Caco-2 (cell line): ENCODE measurements at regions of chr6 and their contacts with region 1.

Region 1: DNA sequence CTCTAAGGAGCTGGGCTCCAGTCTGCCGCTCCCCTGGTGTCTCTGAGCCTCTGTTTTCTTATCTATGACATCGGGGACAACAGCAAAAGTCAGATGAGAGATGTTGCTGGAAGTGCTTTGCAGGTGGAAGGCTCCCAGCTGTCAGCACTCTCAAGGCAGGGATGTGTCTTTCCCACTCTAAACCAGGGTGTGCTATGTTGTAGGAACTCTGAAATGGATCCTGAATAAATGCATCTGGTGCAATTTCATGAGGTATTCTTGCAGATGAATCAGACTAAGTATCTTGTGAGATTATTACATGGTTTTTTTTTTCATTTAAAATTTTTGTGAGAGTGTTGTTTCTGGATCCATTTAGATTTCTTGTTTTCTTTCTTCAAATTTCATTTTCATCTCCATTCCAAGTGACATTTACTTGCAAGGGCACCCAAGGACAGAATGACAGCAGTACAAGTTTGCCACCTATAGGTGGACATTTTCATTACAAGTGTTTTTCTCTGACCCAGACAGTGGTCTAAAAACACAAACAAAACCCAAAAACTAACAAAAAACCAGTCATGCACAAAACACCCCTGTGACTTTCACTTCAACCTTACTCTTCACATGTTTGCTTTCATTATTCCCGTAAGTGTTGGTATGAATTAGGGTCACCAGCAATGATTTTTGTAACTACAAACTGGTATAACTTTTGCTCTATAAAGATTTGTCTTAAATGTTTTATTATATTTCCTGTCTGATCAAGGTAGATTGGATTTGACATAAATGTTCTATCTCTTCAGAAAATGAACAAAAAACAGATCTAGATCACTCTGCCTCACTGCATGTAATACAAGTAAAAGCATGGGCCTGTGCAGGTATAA is 14.7 kb upstream of the SIM1 start:
- DNase-seq: peak in 1 of 2 experiments; percentile 55
- H3K4me3 ChIP-seq: no peak overlapping the region
- H3K4me3 Mint-ChIP-seq: no peak overlapping the region
- H3K27ac Mint-ChIP-seq: no peak overlapping the region
- H3K4me1 ChIP-seq: no peaks in the 10 kb centered on the region
- H3K4me1 Mint-ChIP-seq: no peaks in the 10 kb centered on the region
- H3K27me3 ChIP-seq: no peaks in the 10 kb centered on the region
- H3K27me3 Mint-ChIP-seq: no peaks in the 10 kb centered on the region
- CTCF ChIP-seq: peak; percentile 70 to 73

Region 2: GRCh38 chr6:100105138-100105753 is 374.2 kb before region 1 on chr6:
- CTCF ChIA-PET with region 1: no interaction called
- POLR2A ChIA-PET with region 1: no interaction called
- intact Hi-C with region 1: loop called (anchors 2 kb)
- DNase-seq: no peak
- H3K4me3 ChIP-seq: no peak overlapping the region
- H3K4me3 Mint-ChIP-seq: no peak overlapping the region
- H3K27ac Mint-ChIP-seq: no peak overlapping the region
- H3K4me1 ChIP-seq: no peaks in the 10 kb centered on the region
- H3K4me1 Mint-ChIP-seq: no peaks in the 10 kb centered on the region
- H3K27me3 ChIP-seq: no peaks in the 10 kb centered on the region
- H3K27me3 Mint-ChIP-seq: no peaks in the 10 kb centered on the region
- CTCF ChIP-seq: no peak

Region 3: GRCh38 chr6:100176311-100176950 is 303.0 kb before region 1 on chr6:
- CTCF ChIA-PET with region 1: no interaction called
- POLR2A ChIA-PET with region 1: no interaction called
- intact Hi-C with region 1: loop called (anchors 1 kb)
- DNase-seq: peak; percentile 35 to 42
- H3K4me3 ChIP-seq: no peak overlapping the region
- H3K4me3 Mint-ChIP-seq: no peak overlapping the region
- H3K27ac Mint-ChIP-seq: no peak overlapping the region
- H3K4me1 ChIP-seq: no peaks in the 10 kb centered on the region
- H3K4me1 Mint-ChIP-seq: peaks cover 8% of the 10 kb centered on the region
- H3K27me3 ChIP-seq: no peaks in the 10 kb centered on the region
- H3K27me3 Mint-ChIP-seq: no peaks in the 10 kb centered on the region
- CTCF ChIP-seq: peak; percentile 34 to 37

Region 4: DNA sequence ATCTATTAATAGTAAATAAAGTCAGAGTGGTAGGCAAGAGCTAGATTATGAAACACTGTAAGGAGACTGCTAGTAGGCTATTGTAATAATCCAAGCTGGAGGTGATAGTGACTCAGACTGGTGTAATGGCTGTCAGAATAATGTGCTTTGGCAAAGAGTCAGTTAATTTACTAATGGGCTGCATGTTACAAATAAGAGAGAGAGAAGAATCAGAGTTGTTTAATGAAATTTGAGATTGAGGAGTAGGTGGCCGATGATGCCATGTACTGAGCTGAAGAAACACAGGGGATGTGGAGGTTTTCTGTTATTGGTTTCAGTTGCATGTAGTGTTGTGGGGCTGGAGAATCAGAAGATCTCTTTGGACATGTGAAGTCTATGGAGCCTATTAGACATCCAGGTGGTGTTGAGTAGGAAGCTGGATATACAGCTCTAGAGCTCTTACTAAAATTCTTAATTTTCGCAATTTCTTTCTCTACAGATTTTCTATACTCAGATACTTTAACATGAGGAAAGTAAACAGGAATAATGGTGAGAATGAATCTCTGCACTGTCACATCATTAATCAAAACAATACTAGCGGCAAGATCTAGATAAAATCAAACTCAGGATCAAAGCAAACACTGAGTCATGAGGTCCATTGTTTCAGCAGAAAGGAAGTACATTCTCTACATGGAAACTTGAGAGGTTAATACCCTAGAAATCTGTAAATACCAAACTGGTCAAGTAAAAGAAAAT is 182.4 kb before region 1 on chr6:
- CTCF ChIA-PET with region 1: no interaction called
- POLR2A ChIA-PET with region 1: no interaction called
- intact Hi-C with region 1: no loop called
- DNase-seq: no peak
- H3K4me3 ChIP-seq: no peak overlapping the region
- H3K4me3 Mint-ChIP-seq: no peak overlapping the region
- H3K27ac Mint-ChIP-seq: no peak overlapping the region
- H3K4me1 ChIP-seq: peaks cover 36% of the 10 kb centered on the region
- H3K4me1 Mint-ChIP-seq: peaks cover 15% of the 10 kb centered on the region
- H3K27me3 ChIP-seq: no peaks in the 10 kb centered on the region
- H3K27me3 Mint-ChIP-seq: no peaks in the 10 kb centered on the region
- CTCF ChIP-seq: no peak

Region 5: GRCh38 chr6:100322886-100323285 is 156.5 kb before region 1 on chr6:
- CTCF ChIA-PET with region 1: no interaction called
- POLR2A ChIA-PET with region 1: no interaction called
- intact Hi-C with region 1: loop called (anchors 1 kb)
- DNase-seq: no peak
- H3K4me3 ChIP-seq: no peak overlapping the region
- H3K4me3 Mint-ChIP-seq: no peak overlapping the region
- H3K27ac Mint-ChIP-seq: no peak overlapping the region
- H3K4me1 ChIP-seq: no peaks in the 10 kb centered on the region
- H3K4me1 Mint-ChIP-seq: no peaks in the 10 kb centered on the region
- H3K27me3 ChIP-seq: no peaks in the 10 kb centered on the region; the same call in 1 of the 2 replicates
- H3K27me3 Mint-ChIP-seq: no peaks in the 10 kb centered on the region
- CTCF ChIP-seq: no peak

Region 6: GRCh38 chr6:100664274-100665040 is 185.1 kb after region 1 on chr6:
- CTCF ChIA-PET with region 1: no interaction called
- POLR2A ChIA-PET with region 1: no interaction called
- intact Hi-C with region 1: loop called (anchors 5 kb)
- DNase-seq: peak in 1 of 2 experiments; percentile 13
- H3K4me3 ChIP-seq: no peak overlapping the region
- H3K4me3 Mint-ChIP-seq: no peak overlapping the region
- H3K27ac Mint-ChIP-seq: no peak overlapping the region
- H3K4me1 ChIP-seq: no peaks in the 10 kb centered on the region; the same call in 1 of the 2 replicates
- H3K4me1 Mint-ChIP-seq: peaks cover 8% of the 10 kb centered on the region
- H3K27me3 ChIP-seq: no peaks in the 10 kb centered on the region
- H3K27me3 Mint-ChIP-seq: no peaks in the 10 kb centered on the region
- CTCF ChIP-seq: peak; percentile 57 to 59